ENCODE measurements at regions of chr11 and their contacts with region 1.

Region 1: DNA sequence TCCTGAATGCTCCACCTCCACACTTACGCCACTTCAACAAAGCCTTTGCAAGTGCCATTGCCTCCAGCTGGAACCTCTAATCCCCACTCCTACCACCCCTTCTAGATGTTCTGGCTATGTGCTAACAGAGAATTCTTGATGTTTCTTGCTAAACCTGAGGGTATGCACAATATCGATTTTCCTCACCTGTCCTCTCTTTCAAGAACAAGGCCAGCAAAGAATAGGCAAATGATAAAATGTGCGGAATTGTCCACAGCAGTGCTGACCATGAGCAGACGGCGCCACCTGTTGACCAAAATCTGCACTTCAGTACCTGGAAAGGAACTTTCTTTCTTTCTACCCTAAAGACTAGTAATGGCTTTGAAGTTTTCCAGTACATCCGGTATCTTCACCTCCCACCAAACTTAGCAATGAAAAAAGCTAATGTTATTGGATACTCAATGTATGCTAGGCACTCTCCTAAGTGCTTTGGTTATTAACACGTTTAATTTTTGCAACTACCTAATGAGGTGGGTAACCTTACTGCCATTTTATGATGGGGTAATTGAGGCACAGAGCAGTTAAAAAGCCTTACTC is 3.4 kb downstream of the TIMM10 start:
- DNase-seq: no peak
- H3K4me3 ChIP-seq: no peak overlapping the region
- H3K27ac ChIP-seq: no peak overlapping the region
- H3K4me1 ChIP-seq: peaks cover 12% of the 10 kb centered on the region
- H3K27me3 ChIP-seq: no peaks in the 10 kb centered on the region
- CTCF ChIP-seq: peak; percentile 78 to 91 (median 89)
- POLR2A ChIP-seq: no peak

Region 2: DNA sequence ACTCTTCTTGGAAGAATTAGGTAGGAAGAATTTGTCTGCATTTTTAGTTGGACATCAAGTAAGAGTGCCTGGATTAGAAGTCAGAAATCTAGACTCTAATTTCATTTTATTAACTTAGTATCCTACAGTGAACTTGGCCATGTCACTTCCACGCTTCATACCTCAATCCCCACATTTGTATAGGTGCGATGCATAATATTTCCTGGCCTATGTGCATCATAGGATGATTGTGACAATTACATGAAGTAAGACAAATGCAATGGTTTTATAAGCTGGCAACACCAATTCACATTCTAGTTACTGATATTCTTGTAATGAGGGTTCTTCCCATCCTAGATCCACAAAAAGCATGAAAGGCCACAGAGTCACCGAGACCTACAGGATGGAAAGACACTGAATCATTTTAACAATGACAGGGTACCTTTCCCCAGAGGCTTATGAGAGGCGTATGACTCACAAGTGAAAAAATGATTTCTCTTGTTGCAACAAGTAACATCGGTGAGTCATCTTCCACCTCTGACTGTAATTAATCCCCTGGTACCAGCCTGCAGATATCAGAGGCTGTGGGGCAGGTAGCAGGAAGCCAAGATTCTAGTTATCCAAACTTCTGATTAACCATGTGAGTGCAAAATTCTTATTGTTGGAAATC is 594.4 kb before region 1 on chr11:
- intact Hi-C with region 1: no loop called
- DNase-seq: no peak
- H3K4me3 ChIP-seq: no peak overlapping the region
- H3K27ac ChIP-seq: no peak overlapping the region
- H3K4me1 ChIP-seq: no peaks in the 10 kb centered on the region
- H3K27me3 ChIP-seq: no peaks in the 10 kb centered on the region
- CTCF ChIP-seq: no peak
- POLR2A ChIP-seq: no peak

Region 3: DNA sequence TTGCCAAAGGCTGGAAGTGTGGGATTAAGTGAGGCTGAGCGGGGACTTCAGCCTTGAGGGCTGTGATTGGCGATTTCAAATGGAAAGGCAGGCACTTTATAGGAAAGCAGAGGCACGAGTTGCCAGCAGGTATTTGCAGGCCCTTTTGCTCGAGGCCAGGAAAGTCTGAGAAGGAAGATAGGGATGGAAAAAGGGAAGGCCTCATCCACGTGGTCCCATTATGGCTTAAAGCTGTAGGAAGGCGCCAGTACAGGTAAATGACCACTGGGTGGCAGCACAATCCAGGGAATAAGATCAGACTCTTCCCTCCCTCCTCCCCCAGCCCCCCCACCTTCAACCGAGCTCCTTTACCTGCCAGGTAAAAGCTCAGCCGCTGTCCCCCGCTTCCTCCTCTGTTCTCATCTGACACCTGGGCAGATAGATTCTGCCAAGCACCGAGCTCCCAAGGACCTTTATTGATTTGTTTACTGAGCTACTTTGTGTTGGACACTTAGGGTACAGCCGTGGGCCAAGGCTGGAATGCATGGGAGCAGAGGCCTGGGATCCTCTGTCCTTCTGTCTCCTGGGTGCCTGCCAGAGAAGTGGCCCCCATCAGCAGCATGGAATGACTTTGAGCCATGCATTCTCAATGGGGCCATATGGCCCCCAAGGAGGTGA is 181.5 kb before region 1 on chr11:
- intact Hi-C with region 1: loop called (anchors 10 kb)
- DNase-seq: no peak
- H3K4me3 ChIP-seq: no peak overlapping the region
- H3K27ac ChIP-seq: no peak overlapping the region
- H3K4me1 ChIP-seq: peaks cover 7% of the 10 kb centered on the region
- H3K27me3 ChIP-seq: no peaks in the 10 kb centered on the region
- CTCF ChIP-seq: peak; percentile 23 to 67 (median 54)
- POLR2A ChIP-seq: no peak

Region 4: GRCh38 chr11:57456960-57457642 is 70.0 kb before region 1 on chr11:
- intact Hi-C with region 1: loop called (anchors 2 kb)
- DNase-seq: no peak
- H3K4me3 ChIP-seq: no peak overlapping the region
- H3K27ac ChIP-seq: no peak overlapping the region
- H3K4me1 ChIP-seq: peaks cover 39% of the 10 kb centered on the region
- H3K27me3 ChIP-seq: no peaks in the 10 kb centered on the region
- CTCF ChIP-seq: peak; percentile 90 to 98 (median 94)
- POLR2A ChIP-seq: no peak

Region 5: GRCh38 chr11:57493507-57494503 is 33.3 kb before region 1 on chr11:
- intact Hi-C with region 1: loop called (anchors 5 kb)
- DNase-seq: no peak
- H3K4me3 ChIP-seq: no peak overlapping the region
- H3K27ac ChIP-seq: no peak overlapping the region
- H3K4me1 ChIP-seq: peaks cover 6% of the 10 kb centered on the region
- H3K27me3 ChIP-seq: no peaks in the 10 kb centered on the region
- CTCF ChIP-seq: peak; percentile 54 to 80 (median 70)
- POLR2A ChIP-seq: no peak

Measured in vagina (tissue), 2 donors.